ENCODE measurements at regions of chr12 and their contacts with region 1.

Region 1: GRCh38 chr12:44929236-44929885 is 53.2 kb upstream of the NELL2 start:
- DNase-seq: no peak
- ATAC-seq: no peak
- H3K4me3 ChIP-seq: no peak overlapping the region
- H3K27ac ChIP-seq: no peak overlapping the region
- H3K4me1 ChIP-seq: no peaks in the 10 kb centered on the region
- H3K27me3 ChIP-seq: no peaks in the 10 kb centered on the region

Region 2: DNA sequence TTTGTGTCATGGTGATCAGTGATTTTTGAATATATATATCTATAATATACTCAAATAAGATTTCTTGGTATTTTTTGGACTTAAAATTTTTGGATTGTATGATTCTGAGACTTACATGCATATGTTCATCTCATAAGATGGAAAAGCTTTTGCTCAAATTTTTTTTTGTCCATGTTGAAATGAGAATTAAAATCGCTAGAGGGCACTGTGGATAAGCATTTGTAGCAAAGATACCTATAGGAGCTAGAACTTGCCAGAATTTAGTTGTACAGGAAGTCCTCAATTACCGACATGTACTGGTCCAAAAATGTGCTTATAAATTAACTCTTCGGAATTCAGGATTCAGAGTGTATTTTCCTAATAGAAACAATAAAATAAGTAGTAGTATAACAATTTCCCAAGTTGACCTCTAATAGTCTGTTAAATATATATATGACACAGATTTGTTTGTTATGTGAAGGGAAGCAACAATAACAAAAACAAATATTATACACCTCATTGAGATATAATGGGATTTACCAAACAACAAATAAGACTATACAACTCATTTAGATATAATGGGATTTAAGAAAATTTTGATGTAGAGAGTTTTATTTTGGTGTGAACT is 913.9 kb before region 1 on chr12:
- intact Hi-C with region 1: loop called in 3 of 4 experiments (anchors 5 to 10 kb)
- DNase-seq: no peak
- ATAC-seq: peak; percentile 53 to 67
- H3K4me3 ChIP-seq: no peak overlapping the region
- H3K27ac ChIP-seq: no peak overlapping the region
- H3K4me1 ChIP-seq: no peaks in the 10 kb centered on the region
- H3K27me3 ChIP-seq: no peaks in the 10 kb centered on the region

Region 3: GRCh38 chr12:44696542-44696941 is 232.8 kb before region 1 on chr12:
- intact Hi-C with region 1: no loop called
- DNase-seq: no peak
- ATAC-seq: no peak
- H3K4me3 ChIP-seq: no peak overlapping the region
- H3K27ac ChIP-seq: no peak overlapping the region
- H3K4me1 ChIP-seq: no peaks in the 10 kb centered on the region
- H3K27me3 ChIP-seq: peaks cover 3% of the 10 kb centered on the region

Measured in right cardiac atrium (tissue), 5 donors.